AG04449 (cell line): ENCODE measurements at regions of chr5 and their contacts with region 1.

Region 1: GRCh38 chr5:149561848-149562247 is 10.6 kb upstream of the CSNK1A1 start:
- DNase-seq: peak; percentile 82
- H3K4me3 ChIP-seq: no peak overlapping the region
- CTCF ChIP-seq: no peak

Region 2: DNA sequence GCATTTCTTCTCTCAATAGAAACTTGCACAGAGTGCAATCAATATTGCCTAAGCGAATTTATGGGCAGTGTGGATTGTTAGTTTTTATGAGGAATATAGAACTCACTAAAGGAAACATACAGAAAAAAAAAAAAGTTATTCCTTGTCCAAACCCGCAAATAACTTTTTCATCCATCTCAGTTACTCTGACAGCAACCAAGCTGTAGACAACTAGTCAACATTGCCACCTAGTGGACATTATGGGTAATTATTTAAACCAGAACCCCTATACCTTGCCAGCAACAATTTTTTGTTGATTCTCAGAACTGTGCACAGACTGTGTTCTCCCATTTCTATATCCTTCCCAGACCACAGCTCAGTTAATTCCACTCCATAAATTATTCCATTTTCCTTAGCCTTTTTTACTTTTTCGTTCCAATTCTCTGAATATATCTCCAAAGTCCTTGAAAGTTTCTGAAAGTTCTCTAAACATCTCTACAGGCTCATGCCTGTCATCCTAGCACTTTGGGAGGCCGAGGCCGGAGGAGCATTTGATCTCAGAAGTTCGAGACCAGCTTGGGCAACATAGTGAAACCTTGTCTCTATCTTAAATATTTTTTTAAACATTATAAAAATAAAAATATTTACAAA is 292.8 kb before region 1 on chr5:
- CTCF ChIA-PET with region 1: interaction called, 12 read pairs
- POLR2A ChIA-PET with region 1: no interaction called
- DNase-seq: no peak
- H3K4me3 ChIP-seq: no peak overlapping the region
- CTCF ChIP-seq: peak; percentile 36

Region 3: GRCh38 chr5:149381987-149382340 is 179.9 kb before region 1 on chr5:
- CTCF ChIA-PET with region 1: interaction called, 30 read pairs
- POLR2A ChIA-PET with region 1: no interaction called
- DNase-seq: no peak
- H3K4me3 ChIP-seq: peak overlapping the region; percentile 18
- CTCF ChIP-seq: peak; percentile 95

Region 4: GRCh38 chr5:149442563-149443182 is 119.2 kb before region 1 on chr5:
- CTCF ChIA-PET with region 1: interaction called, 678 read pairs
- POLR2A ChIA-PET with region 1: interaction called, 18 read pairs
- DNase-seq: no peak
- H3K4me3 ChIP-seq: no peak overlapping the region
- CTCF ChIP-seq: peak; percentile 96

Region 5: DNA sequence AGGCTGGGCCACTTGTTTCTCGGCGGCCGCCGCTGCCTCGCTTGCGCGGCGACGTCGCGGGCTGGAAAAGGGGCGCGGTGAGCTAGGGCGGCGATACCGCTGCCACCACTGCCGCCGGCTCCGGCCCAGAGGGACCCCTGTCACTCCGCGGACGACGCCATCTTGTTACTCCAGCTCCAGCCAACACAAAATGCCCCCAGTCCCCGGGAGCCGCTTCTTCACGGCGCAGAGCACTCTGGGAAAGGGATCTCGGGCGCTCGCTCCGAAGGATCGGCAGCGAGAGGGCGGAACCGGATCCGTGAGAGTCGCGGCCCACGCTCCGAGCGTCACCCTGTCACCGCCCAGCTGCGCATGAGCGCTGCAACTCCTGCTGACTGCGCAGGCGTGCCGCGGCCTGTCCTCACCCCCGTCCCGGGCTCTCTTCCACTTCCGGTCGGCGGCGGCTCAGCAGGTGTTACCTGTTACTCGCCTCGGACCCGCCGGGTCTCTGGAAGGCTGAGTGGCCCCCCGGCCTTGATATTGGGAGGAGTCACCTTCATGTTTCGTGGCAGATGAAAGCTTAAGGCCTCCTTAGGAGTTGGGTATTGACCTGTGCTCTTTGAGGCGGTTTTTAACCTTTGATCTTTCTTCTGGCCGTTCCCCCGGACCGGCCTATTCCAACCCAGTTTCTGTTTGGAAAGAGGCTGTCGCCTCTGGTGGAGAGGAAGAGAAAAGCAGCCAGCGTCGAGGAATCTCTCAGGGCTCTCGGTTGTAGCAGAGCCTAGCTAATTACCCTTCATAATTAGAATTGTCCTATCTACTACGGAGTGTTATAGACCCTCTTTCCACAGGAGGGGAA is 10.4 kb before region 1 on chr5 and contains the start of gene CSNK1A1:
- CTCF ChIA-PET with region 1: interaction called, 60 read pairs
- POLR2A ChIA-PET with region 1: interaction called, 23 read pairs
- DNase-seq: peak; percentile 82
- H3K4me3 ChIP-seq: peak within 1 kb of the TSS; percentile 95
- CTCF ChIP-seq: peak; percentile 64

Region 6: DNA sequence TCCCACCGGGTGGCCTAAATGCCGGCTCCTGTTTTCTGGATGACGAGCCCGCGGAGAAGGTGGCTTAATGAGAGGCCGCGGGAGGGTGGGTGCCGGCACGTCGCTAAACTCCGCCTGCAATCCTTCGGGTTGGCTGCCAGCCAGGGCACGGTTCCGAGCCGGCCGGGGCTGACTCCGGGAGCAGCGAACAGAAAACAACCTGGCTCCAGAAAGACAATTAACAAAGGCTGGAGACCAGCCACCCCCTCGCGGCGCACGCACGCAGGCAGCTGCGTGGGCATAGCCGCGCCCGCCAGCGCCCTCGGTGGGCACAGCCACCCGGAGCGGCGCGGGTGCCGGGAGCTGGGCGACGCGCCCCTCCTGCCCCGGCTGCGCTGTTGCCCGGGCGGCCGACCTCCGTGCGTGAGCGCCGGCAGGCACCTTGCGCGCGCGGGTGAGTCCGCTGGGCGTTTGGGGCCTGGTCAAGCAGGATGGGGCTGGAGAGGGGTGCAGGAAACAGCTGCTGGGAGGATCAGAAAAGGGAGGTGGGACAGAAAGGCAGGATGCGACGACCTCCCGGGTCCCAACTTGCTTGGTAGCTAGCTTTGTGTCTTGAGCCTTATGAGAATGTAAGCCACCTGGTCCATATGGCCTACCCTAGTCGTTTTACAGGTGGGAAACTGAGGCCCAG is 19.5 kb after region 1 on chr5 and contains the start of gene ARHGEF37:
- CTCF ChIA-PET with region 1: interaction called, 18 read pairs
- POLR2A ChIA-PET with region 1: no interaction called
- DNase-seq: no peak
- H3K4me3 ChIP-seq: peak within 1 kb of the TSS; percentile 57
- CTCF ChIP-seq: no peak